Psoas muscle (tissue), 8 donors: ENCODE measurements at regions of chr7 and their contacts with region 1.

Region 1: GRCh38 chr7:80499350-80499953 is 12.4 kb downstream of the GNAT3 start:
- DNase-seq: peak; percentile 36 to 62
- ATAC-seq: peak; percentile 90 to 96 (median 94)
- H3K4me3 ChIP-seq: no peak overlapping the region
- H3K27ac ChIP-seq: peak overlapping the region; percentile 77
- H3K4me1 ChIP-seq: peaks cover 25% of the 10 kb centered on the region
- H3K27me3 ChIP-seq: peaks cover 0 to 3% (median 0%) of the 10 kb centered on the region in 3 donors
- CTCF ChIP-seq: no peak

Region 2: GRCh38 chr7:80467069-80467468 is 32.4 kb before region 1 on chr7:
- intact Hi-C with region 1: no loop called
- DNase-seq: no peak
- ATAC-seq: no peak
- H3K4me3 ChIP-seq: no peak overlapping the region
- H3K27ac ChIP-seq: no peak overlapping the region
- H3K4me1 ChIP-seq: peaks cover 12% of the 10 kb centered on the region
- H3K27me3 ChIP-seq: no peaks in the 10 kb centered on the region
- CTCF ChIP-seq: no peak

Region 3: GRCh38 chr7:80584778-80585177 is 85.3 kb after region 1 on chr7:
- intact Hi-C with region 1: loop called in 1 of 2 experiments (anchors 5 kb)
- DNase-seq: no peak
- ATAC-seq: peak; percentile 59 to 81 (median 78)
- H3K4me3 ChIP-seq: no peak overlapping the region
- H3K27ac ChIP-seq: peak overlapping the region; percentile 73
- H3K4me1 ChIP-seq: peaks cover 44% of the 10 kb centered on the region
- H3K27me3 ChIP-seq: no peaks in the 10 kb centered on the region
- CTCF ChIP-seq: no peak

Region 4: GRCh38 chr7:80637911-80638765 is 138.7 kb after region 1 on chr7 and contains the start of gene CD36:
- intact Hi-C with region 1: loop called in 1 of 2 experiments (anchors 5 kb)
- DNase-seq: no peak
- ATAC-seq: peak in 3 of 4 donors; percentile 20 to 36 (median 31)
- H3K4me3 ChIP-seq: peak within 1 kb of the TSS; percentile 57
- H3K27ac ChIP-seq: peak within 1 kb of the TSS; percentile 92
- H3K4me1 ChIP-seq: peaks cover 46% of the 10 kb centered on the region
- H3K27me3 ChIP-seq: no peaks in the 10 kb centered on the region
- CTCF ChIP-seq: no peak
- total RNA-seq, gene CD36: 149 to 662 (median 240) TPM

Region 5: DNA sequence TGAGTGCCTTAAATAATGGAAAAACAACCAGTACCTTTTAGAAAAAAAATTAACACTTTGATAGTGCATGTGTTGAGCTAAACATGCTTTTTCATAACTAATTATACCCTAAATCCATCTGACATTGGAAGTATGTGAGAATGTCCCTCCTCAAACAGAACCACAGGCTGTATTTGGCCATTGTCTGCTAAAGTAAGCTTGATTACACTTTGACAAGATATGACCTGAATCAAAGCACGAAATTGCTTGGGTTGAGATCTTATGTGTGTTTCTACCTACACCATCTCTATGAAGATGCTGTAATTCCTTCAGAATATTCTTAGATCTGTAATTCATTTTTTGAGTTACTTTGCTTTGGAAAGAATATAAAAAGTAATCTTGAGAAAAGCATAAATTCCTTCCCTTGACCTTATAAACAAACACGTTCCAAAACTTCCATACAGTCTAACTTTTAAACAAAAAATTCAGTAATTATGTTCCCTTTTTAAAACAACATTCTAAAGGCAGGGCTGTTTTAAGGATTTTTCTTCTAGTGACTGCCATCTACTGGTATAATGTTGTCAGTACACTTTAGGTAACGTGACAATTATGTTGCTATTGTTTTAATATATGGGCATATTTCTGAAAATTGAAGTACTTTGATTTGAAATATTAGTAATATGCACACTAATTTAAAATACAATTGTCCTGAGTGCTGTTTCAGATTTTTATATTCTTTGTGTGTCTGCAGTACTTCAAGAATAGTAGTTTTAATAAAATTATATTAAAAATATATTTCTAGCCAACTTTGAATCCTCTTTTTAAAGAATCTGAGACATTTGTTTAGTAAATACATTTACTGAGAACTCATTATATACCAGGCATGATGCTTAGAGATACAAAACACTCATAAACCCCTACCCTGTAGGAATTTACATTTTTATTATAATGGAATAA is 159.9 kb after region 1 on chr7:
- intact Hi-C with region 1: loop called in 1 of 2 experiments (anchors 10 kb)
- DNase-seq: no peak
- ATAC-seq: peak in 3 of 4 donors; percentile 52 to 72 (median 65)
- H3K4me3 ChIP-seq: no peak overlapping the region
- H3K27ac ChIP-seq: peak overlapping the region; percentile 43
- H3K4me1 ChIP-seq: peaks cover 6% of the 10 kb centered on the region
- H3K27me3 ChIP-seq: no peaks in the 10 kb centered on the region
- CTCF ChIP-seq: peak; percentile 79